A549 (cell line): ENCODE measurements at regions of chr2 and their contacts with region 1.

Region 1: GRCh38 chr2:11329781-11330180 is 14.7 kb downstream of the ROCK2 start:
- DNase-seq: no peak
- ATAC-seq: no peak
- H3K4me3 ChIP-seq: no peak overlapping the region
- H3K27ac ChIP-seq: no peak overlapping the region
- H3K4me1 ChIP-seq: peaks cover 23% of the 10 kb centered on the region
- CTCF ChIP-seq: no peak
- EP300 ChIP-seq: no peak
- POLR2A ChIP-seq: no peak
- RAD21 ChIP-seq: no peak

Region 2: GRCh38 chr2:11281186-11281585 is 48.6 kb before region 1 on chr2:
- CTCF ChIA-PET with region 1: no interaction called
- POLR2A ChIA-PET with region 1: interaction called, 10 read pairs
- DNase-seq: no peak
- ATAC-seq: no peak
- H3K4me3 ChIP-seq: no peak overlapping the region
- H3K27ac ChIP-seq: no peak overlapping the region
- H3K4me1 ChIP-seq: no peaks in the 10 kb centered on the region
- CTCF ChIP-seq: no peak
- EP300 ChIP-seq: no peak
- POLR2A ChIP-seq: no peak
- RAD21 ChIP-seq: no peak